Dorsolateral prefrontal cortex (tissue), 120 donors: ENCODE measurements at regions of chr6 and their contacts with region 1.

Region 1: GRCh38 chr6:34887753-34888513 is at the start of gene TAF11:
- DNase-seq: peak; percentile 89 to 94 (median 93)
- H3K4me3 ChIP-seq: peak within 1 kb of the TSS; percentile 57 to 100 (median 89)
- H3K27ac ChIP-seq: peak within 1 kb of the TSS; percentile 18 to 94 (median 84)
- H3K27me3 ChIP-seq: no peaks in the 10 kb centered on the region
- CTCF ChIP-seq: peak in 19 of 56 donors; percentile 8 to 43 (median 24)
- total RNA-seq, gene TAF11: 14.9 to 28.0 (median 20.9) TPM

Region 2: GRCh38 chr6:34526992-34527728 is 360.8 kb before region 1 on chr6:
- intact Hi-C with region 1: loop called in 1 of 2 experiments (anchors 5 kb)
- DNase-seq: peak; percentile 86 to 97 (median 90)
- H3K4me3 ChIP-seq: peak overlapping the region in 58 of 59 donors; percentile 8 to 62 (median 46)
- H3K27ac ChIP-seq: peak overlapping the region in 38 of 59 donors; percentile 1 to 71 (median 42)
- H3K27me3 ChIP-seq: no peaks in the 10 kb centered on the region
- CTCF ChIP-seq: peak in 54 of 56 donors; percentile 53 to 84 (median 72)

Region 3: GRCh38 chr6:34757687-34758274 is 130.2 kb before region 1 on chr6:
- intact Hi-C with region 1: loop called (anchors 1 to 2 kb)
- DNase-seq: no peak
- H3K4me3 ChIP-seq: peak overlapping the region; percentile 62 to 99 (median 84)
- H3K27ac ChIP-seq: peak overlapping the region in 57 of 59 donors; percentile 21 to 98 (median 94)
- H3K27me3 ChIP-seq: no peaks in the 10 kb centered on the region
- CTCF ChIP-seq: no peak

Region 4: DNA sequence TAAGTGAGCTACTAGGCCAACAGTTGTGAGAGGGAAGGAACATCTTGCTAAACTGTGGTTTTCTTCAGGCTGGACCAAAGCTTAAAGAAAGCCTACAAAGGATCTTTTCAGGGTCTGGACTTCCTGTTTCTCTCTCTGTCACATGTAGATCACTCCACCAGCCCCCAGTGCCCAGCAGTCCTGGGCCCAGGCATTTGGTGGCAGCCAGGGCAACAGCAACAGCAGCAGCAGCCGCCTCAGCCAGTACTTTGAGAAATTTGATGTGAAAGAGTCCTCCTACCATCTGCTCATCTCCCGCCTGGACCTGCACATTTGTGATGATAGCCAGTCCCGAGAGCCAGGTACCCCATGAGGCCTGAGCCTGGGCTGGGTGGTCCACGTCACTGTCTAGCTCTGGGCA is 51.9 kb before region 1 on chr6:
- intact Hi-C with region 1: no loop called
- DNase-seq: peak in 1 of 10 donors; percentile 11
- H3K4me3 ChIP-seq: no peak overlapping the region
- H3K27ac ChIP-seq: peak overlapping the region in 36 of 59 donors; percentile 4 to 81 (median 50)
- H3K27me3 ChIP-seq: no peaks in the 10 kb centered on the region
- CTCF ChIP-seq: no peak

Region 5: DNA sequence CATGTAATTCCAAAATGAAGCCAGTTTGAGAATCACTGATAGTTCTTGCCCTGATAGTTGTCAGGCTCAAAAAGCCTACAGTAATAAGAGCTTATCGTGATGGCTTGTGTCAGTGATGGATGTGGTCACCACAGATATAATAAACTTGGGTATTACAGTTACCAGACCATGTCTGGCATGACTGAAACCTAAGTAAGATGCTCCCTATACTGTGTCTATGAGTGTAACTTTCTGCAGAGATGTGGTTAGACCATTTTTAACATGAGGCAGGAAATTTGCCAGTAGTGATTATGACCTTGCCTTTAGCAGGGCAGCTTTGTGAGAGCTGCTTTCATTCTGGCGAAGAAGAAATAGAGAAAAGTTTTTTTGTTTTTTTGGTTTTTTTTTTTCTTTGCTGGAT is 91.3 kb after region 1 on chr6:
- intact Hi-C with region 1: loop called (anchors 5 kb)
- DNase-seq: no peak
- H3K4me3 ChIP-seq: no peak overlapping the region
- H3K27ac ChIP-seq: no peak overlapping the region
- H3K27me3 ChIP-seq: no peaks in the 10 kb centered on the region
- CTCF ChIP-seq: no peak

Region 6: DNA sequence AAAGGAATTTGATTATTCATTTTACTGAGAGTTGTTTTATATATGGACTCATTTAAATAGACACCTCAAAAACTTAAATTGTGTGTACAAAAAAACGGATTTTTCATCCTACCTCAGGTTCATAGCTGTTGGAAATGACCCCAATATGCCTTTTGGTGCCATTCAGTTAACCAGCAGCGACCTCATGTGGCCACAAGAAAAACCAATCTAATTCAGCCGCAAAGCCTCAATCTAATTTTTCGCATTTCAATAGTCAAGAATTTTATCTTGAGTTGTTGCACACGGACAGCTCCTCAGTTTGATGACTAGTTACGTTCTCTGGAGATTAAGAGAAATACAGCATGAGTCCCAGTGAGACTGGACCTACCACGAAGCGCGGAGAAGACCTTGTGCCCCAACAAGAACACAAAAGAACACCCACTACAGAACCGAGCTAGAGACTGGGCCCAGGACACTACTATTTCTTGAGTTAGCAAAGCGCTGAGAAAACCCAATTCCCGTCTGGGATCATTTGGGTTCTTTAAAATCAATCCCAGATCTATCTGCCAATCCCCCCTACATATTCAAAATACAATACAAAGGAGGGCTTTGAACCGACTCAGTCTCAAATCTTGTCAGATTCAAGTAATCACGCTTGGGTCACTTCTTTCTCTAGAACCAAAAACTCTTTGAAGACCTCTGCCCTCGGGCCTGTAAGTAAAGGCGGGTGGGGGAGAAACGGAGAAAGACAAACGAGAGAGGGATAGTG is 252.1 kb after region 1 on chr6:
- intact Hi-C with region 1: loop called in 1 of 2 experiments (anchors 5 kb)
- DNase-seq: peak in 6 of 10 donors; percentile 32 to 55 (median 44)
- H3K4me3 ChIP-seq: peak overlapping the region in 1 of 59 donors; percentile 15
- H3K27ac ChIP-seq: no peak overlapping the region
- H3K27me3 ChIP-seq: peaks cover 0 to 11% (median 0%) of the 10 kb centered on the region in 45 donors
- CTCF ChIP-seq: peak; percentile 77 to 98 (median 88)